ENCODE measurements at regions of chr11 and their contacts with region 1.

Region 1: GRCh38 chr11:36702330-36703055 is 104.5 kb upstream of the RAG2 start:
- DNase-seq: peak; percentile 41
- H3K4me3 ChIP-seq: no peak overlapping the region
- H3K27ac ChIP-seq: no peak overlapping the region
- H3K4me1 ChIP-seq: no peaks in the 10 kb centered on the region
- H3K27me3 ChIP-seq: no peaks in the 10 kb centered on the region
- CTCF ChIP-seq: peak; percentile 52 to 79 (median 77)
- POLR2A ChIP-seq: no peak

Region 2: DNA sequence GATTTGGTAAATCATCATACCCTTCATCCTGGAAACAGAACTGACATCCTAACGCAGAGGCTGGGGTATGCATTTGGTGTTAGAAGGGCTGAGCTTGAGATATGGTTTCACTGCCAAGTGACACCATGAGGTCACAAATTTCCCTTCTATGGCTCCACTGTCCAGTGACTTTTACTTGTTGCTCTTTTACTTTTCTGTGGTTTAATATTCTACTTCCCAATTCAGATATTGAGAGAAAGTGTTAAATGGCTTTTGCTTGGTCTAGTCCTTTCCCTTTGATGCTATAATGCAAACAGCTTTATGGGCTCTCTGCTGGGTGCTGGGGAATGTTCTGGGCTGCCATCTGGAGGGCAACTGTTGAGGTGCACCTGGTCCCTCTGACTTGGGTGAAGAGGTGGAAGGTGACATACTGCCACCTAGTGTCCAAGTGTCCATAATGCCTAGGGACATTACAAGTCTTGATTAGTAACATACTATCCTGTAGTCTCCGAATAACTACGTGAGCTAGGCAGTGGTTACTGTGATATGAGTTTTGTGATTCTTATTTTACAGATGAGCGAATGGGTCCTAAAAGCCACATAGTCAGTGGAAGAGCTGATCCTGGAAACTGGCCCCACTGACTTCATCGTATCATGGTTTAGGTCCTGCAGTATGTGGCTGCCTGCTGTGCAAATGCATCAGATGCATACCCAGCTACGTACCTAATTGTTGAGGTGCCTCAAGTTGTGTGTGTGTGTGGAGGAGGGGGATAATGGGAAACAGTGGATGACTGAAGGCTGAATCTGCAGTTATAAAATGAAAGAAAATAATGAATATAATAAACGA is 44.6 kb after region 1 on chr11:
- intact Hi-C with region 1: loop called (anchors 5 kb)
- DNase-seq: peak; percentile 96
- H3K4me3 ChIP-seq: no peak overlapping the region
- H3K27ac ChIP-seq: no peak overlapping the region
- H3K4me1 ChIP-seq: no peaks in the 10 kb centered on the region
- H3K27me3 ChIP-seq: no peaks in the 10 kb centered on the region
- CTCF ChIP-seq: peak; percentile 92 to 97 (median 97)
- POLR2A ChIP-seq: no peak